Esophagus muscularis mucosa (tissue), 4 donors: ENCODE measurements at regions of chr11 and their contacts with region 1.

Region 1: GRCh38 chr11:72238040-72238450 is 5.9 kb downstream of the PHOX2A start:
- DNase-seq: no peak
- H3K4me3 ChIP-seq: no peak overlapping the region
- H3K27ac ChIP-seq: peak overlapping the region; percentile 76 to 86 (median 78)
- H3K4me1 ChIP-seq: peaks cover 42 to 82% (median 68%) of the 10 kb centered on the region in 4 donors
- H3K27me3 ChIP-seq: peaks cover 2 to 26% (median 9%) of the 10 kb centered on the region in 4 donors
- CTCF ChIP-seq: peak; percentile 71 to 91 (median 80)
- EP300 ChIP-seq: no peak
- POLR2A ChIP-seq: no peak

Region 2: DNA sequence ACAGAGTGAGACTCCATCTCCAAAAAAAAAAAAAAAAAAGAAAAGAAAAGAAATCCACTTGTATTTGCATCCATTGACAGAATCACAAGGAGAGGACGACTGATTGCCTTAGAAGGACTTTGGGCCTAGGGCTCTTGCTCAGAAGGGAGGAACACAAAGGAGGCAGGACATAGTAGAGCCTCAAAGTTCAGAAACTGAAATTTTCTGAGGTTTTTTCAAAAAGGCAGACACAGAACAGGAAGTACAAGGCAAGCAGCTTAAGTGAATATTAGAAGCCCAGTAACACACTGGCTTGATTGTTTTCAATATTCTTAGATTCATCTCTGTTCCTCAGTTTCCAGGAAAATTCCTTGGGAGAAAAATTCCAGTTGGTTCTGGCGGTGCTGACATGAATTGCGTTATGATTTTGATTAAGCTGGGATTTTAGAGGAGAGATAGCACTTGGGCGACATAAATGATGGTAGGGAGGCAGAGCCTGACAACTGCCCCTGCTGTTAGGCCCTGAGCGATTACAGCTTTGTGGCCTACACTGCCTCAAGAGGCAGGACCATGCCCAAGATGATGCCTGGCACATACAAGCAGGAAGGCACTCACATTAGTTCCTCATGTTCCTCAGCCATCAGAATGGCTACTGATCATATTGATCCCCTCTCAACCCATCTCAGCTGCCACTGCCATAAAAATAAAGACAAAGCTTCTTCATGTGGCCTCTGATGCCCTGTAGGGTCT is 181.0 kb after region 1 on chr11:
- intact Hi-C with region 1: loop called (anchors 5 kb)
- DNase-seq: no peak
- H3K4me3 ChIP-seq: no peak overlapping the region
- H3K27ac ChIP-seq: no peak overlapping the region
- H3K4me1 ChIP-seq: peaks cover 6 to 19% (median 8%) of the 10 kb centered on the region in 4 donors
- H3K27me3 ChIP-seq: no peaks in the 10 kb centered on the region
- CTCF ChIP-seq: no peak
- EP300 ChIP-seq: no peak
- POLR2A ChIP-seq: no peak

Region 3: GRCh38 chr11:72493426-72494108 is 255.5 kb after region 1 on chr11:
- intact Hi-C with region 1: no loop called
- DNase-seq: no peak
- H3K4me3 ChIP-seq: no peak overlapping the region
- H3K27ac ChIP-seq: no peak overlapping the region
- H3K4me1 ChIP-seq: no peaks in the 10 kb centered on the region
- H3K27me3 ChIP-seq: peaks cover 0 to 4% (median 0%) of the 10 kb centered on the region in 4 donors
- CTCF ChIP-seq: no peak
- EP300 ChIP-seq: no peak
- POLR2A ChIP-seq: no peak